Heart right ventricle (tissue), 16 donors: ENCODE measurements at regions of chr16 and their contacts with region 1.

Region 1: GRCh38 chr16:58684354-58685083 is at the start of gene SLC38A7:
- DNase-seq: peak; percentile 89 to 90
- ATAC-seq: peak; percentile 89 to 96 (median 94)
- H3K4me3 ChIP-seq: peak within 1 kb of the TSS; percentile 71 to 94 (median 84)
- H3K27ac ChIP-seq: peak within 1 kb of the TSS; percentile 42 to 94 (median 90)
- H3K4me1 ChIP-seq: peaks cover 3 to 37% (median 25%) of the 10 kb centered on the region in 9 donors
- H3K27me3 ChIP-seq: no peaks in the 10 kb centered on the region
- CTCF ChIP-seq: no peak
- total RNA-seq, gene SLC38A7: 24.1 to 38.7 (median 31.8) TPM

Region 2: GRCh38 chr16:58464047-58464915 is 220.2 kb before region 1 on chr16:
- intact Hi-C with region 1: no loop called
- DNase-seq: peak; percentile 46 to 62
- ATAC-seq: peak; percentile 34 to 61 (median 52)
- H3K4me3 ChIP-seq: peak overlapping the region; percentile 61 to 96 (median 84)
- H3K27ac ChIP-seq: peak overlapping the region; percentile 68 to 98 (median 94)
- H3K4me1 ChIP-seq: peaks cover 0 to 69% (median 33%) of the 10 kb centered on the region in 9 donors
- H3K27me3 ChIP-seq: peaks cover 0 to 76% (median 13%) of the 10 kb centered on the region in 7 donors
- CTCF ChIP-seq: peak in 1 of 9 donors; percentile 16

Region 3: GRCh38 chr16:58629572-58630104 is 54.9 kb before region 1 on chr16 and contains the start of gene CNOT1:
- intact Hi-C with region 1: loop called in 1 of 10 experiments (anchors 1 kb)
- DNase-seq: peak; percentile 97 to 98
- ATAC-seq: peak; percentile 94 to 96 (median 96)
- H3K4me3 ChIP-seq: peak within 1 kb of the TSS; percentile 82 to 99 (median 94)
- H3K27ac ChIP-seq: peak within 1 kb of the TSS; percentile 93 to 99 (median 98)
- H3K4me1 ChIP-seq: peaks cover 6 to 45% (median 34%) of the 10 kb centered on the region in 9 donors
- H3K27me3 ChIP-seq: no peaks in the 10 kb centered on the region
- CTCF ChIP-seq: no peak
- total RNA-seq, gene CNOT1: 66.9 to 102 (median 88.1) TPM

Region 4: GRCh38 chr16:58639836-58640235 is 44.7 kb before region 1 on chr16:
- intact Hi-C with region 1: no loop called
- DNase-seq: no peak
- ATAC-seq: no peak
- H3K4me3 ChIP-seq: no peak overlapping the region
- H3K27ac ChIP-seq: no peak overlapping the region
- H3K4me1 ChIP-seq: peaks cover 0 to 18% (median 0%) of the 10 kb centered on the region in 9 donors
- H3K27me3 ChIP-seq: no peaks in the 10 kb centered on the region
- CTCF ChIP-seq: no peak

Region 5: DNA sequence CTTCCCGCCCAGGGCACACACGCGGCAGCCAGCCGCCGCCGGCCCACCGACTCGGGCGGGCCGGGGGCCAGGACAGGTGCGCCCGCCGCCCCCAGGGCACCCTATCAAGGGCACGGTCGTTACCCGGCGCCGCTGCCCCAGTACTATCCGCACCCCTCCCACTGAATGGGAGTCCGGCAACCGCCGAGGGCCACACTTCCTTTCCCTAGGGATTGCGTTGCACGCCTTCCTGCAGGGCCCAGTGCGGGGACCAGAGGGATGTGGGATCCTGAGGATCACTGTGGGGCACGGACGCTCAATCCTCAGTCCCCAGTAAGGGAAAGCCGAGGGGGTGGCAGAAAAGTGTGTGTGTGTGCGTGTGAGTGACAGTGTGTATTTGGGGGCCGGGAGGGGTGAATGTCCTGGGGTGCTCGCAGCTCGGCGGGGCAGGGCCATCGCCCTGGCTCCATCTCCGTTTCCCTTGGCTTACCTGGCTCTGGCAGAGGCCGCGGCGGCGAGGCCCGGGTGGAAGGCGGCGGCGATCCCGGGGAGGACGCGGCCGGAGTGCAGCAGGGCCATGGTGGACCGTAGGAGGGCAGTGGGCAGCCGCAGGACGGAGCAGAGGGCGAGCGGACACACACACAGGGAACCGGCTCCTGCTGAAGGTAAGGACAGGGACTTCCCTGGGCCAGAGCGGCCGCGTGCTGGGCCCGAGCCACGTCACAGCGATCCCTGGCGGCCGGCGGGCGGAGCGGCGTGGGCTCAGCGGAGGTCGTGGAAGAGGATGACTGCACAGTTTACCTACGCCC is 49.3 kb after region 1 on chr16 and contains the start of gene GOT2:
- intact Hi-C with region 1: loop called in 8 of 10 experiments (anchors 2 to 10 kb)
- DNase-seq: peak; percentile 77 to 85
- ATAC-seq: peak; percentile 94 to 98 (median 97)
- H3K4me3 ChIP-seq: peak within 1 kb of the TSS; percentile 74 to 99 (median 92)
- H3K27ac ChIP-seq: peak within 1 kb of the TSS; percentile 74 to 94 (median 89)
- H3K4me1 ChIP-seq: peaks cover 0 to 55% (median 33%) of the 10 kb centered on the region in 9 donors
- H3K27me3 ChIP-seq: no peaks in the 10 kb centered on the region
- CTCF ChIP-seq: peak; percentile 75 to 98 (median 91)
- total RNA-seq, gene GOT2: 379 to 658 (median 556) TPM

Region 6: DNA sequence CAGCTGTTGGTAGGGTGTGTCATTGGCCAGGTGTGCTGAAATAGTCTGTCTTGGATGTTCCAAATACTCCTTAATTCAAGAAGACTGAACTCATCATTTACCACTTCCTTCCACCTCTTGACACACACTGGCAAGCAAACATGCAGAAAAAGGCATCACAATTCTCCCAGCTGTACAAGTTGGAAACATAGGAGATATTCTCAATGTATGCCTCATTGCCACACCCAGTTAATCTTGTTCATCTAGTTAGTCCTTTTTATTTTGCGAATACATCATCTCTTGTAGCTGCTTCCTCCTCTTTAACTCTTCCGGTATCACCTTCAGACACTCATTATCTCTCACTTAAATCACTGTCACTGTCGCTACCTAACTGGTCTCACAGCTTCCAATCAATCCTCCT is 124.7 kb after region 1 on chr16:
- intact Hi-C with region 1: no loop called
- DNase-seq: no peak
- ATAC-seq: no peak
- H3K4me3 ChIP-seq: no peak overlapping the region
- H3K27ac ChIP-seq: no peak overlapping the region
- H3K4me1 ChIP-seq: no peaks in the 10 kb centered on the region
- H3K27me3 ChIP-seq: no peaks in the 10 kb centered on the region
- CTCF ChIP-seq: no peak

Region 7: DNA sequence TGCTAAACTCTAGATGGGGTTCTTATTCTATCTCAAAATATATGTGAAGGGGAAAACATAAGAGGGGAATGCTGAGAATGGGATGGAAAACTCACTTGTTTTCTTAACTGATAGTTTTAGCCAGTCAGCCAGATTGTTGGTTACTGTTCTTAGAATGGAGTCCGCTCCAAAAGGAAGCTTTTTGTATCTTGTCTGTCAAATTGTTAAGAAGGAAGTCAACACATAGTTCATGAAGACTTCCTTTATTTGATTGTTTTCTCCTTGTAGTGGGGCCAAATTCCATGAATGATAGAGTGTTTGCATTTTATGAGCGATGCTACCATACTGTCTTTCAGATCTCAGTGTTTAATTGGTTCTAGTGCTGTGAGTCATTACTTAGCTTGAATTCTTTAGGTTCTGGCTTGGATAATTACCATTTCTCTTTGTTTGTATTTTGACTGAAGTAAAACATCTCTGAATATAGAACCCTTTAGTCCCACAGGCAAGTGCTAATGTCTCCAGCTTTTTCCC is 147.9 kb after region 1 on chr16:
- intact Hi-C with region 1: no loop called
- DNase-seq: no peak
- ATAC-seq: no peak
- H3K4me3 ChIP-seq: no peak overlapping the region
- H3K27ac ChIP-seq: no peak overlapping the region
- H3K4me1 ChIP-seq: no peaks in the 10 kb centered on the region
- H3K27me3 ChIP-seq: no peaks in the 10 kb centered on the region
- CTCF ChIP-seq: no peak